BJ (cell line): ENCODE measurements at regions of chr12 and their contacts with region 1.

Region 1: GRCh38 chr12:12327802-12328201 is 22.2 kb downstream of the MANSC1 start:
- DNase-seq: no peak
- H3K4me3 ChIP-seq: no peak overlapping the region
- H3K27me3 ChIP-seq: no peaks in the 10 kb centered on the region
- CTCF ChIP-seq: peak; percentile 68

Region 2: GRCh38 chr12:12081836-12082497 is 245.8 kb before region 1 on chr12:
- CTCF ChIA-PET with region 1: interaction called, 48 read pairs
- POLR2A ChIA-PET with region 1: no interaction called
- DNase-seq: no peak
- H3K4me3 ChIP-seq: no peak overlapping the region
- H3K27me3 ChIP-seq: no peaks in the 10 kb centered on the region
- CTCF ChIP-seq: peak; percentile 13; the same call in 1 of the 2 replicates

Region 3: DNA sequence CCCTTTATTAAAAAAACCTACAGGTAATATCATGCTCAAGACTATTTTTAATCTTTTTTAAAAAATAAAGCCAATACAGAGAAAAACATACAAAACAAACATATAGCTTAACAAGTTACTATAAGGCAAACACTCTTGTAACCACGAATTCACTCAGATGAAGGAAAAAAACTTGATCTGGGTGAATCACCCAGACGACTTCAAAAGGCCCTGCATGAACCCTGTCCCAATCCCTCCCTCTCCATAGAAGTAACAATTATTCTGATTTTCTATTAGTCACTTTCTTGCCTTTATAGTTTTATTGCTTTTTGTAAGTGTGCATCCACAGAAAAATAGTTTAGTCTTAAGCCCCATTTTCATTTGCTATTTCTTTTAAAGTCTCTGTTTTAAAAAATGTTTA is 133.6 kb before region 1 on chr12:
- CTCF ChIA-PET with region 1: no interaction called
- POLR2A ChIA-PET with region 1: no interaction called
- DNase-seq: no peak
- H3K4me3 ChIP-seq: no peak overlapping the region
- H3K27me3 ChIP-seq: no peaks in the 10 kb centered on the region
- CTCF ChIP-seq: no peak

Region 4: DNA sequence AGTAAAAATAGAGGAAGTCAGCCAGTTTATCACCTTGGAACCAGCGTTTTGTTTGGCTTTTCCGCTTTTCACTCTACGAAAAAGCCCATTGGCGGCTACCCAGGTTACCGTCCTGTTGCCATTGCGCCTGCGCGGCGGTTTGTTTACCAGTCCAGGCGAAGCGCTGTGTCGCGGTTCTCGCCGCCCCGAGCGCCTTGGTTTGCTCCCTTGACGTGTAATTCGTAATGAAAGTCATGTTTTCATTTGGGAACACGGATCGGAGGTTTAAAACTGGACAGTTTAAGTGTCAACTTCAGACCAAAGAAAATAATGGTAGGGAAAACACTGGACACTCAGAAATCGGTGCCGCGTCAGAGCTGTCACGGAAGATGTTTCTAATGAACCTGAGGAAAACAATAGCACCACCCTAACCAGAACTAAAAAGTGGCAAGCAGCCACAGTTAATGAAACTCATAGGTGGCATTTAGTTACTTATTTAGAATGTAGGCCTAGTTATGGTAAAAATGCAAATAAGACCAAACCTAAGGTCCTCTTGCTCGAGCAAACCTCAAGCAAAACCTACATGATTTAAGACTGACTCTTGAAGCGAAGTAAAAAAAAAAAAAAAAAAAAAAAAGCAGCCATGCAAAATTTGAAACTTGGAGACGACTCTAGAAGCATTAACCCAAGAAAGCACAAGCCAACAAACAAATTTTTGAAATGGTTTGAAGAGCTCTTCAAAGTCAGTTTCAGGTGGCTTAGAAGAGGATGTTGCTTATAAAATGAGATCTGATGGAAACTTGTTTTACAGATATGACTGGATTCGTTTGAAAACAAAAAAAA is 369.0 kb after region 1 on chr12:
- CTCF ChIA-PET with region 1: no interaction called
- POLR2A ChIA-PET with region 1: interaction called, 17 read pairs
- DNase-seq: peak; percentile 29
- H3K4me3 ChIP-seq: peak overlapping the region; percentile 46
- H3K27me3 ChIP-seq: no peaks in the 10 kb centered on the region
- CTCF ChIP-seq: no peak